CD4-positive, alpha-beta memory T cell (primary cell): ENCODE measurements at regions of chr5 and their contacts with region 1.

Region 1: GRCh38 chr5:140710899-140711552 is 10.8 kb downstream of the ZMAT2 start:
- DNase-seq: peak; percentile 86 to 95 (median 93)
- H3K4me3 ChIP-seq: peak overlapping the region; percentile 71 to 92
- H3K4me3 Mint-ChIP-seq: peak overlapping the region; percentile 96 to 100 (median 99)
- H3K27ac ChIP-seq: peak overlapping the region; percentile 82
- H3K27ac Mint-ChIP-seq: peak overlapping the region; percentile 97 to 100 (median 99)
- H3K4me1 ChIP-seq: peaks cover 19% of the 10 kb centered on the region
- H3K4me1 Mint-ChIP-seq: peaks cover 15 to 32% (median 23%) of the 10 kb centered on the region in 4 donors
- H3K27me3 ChIP-seq: no peaks in the 10 kb centered on the region
- H3K27me3 Mint-ChIP-seq: peaks cover 0 to 8% of the 10 kb centered on the region in 2 donors

Region 2: GRCh38 chr5:139335811-139336210 is 1375.2 kb before region 1 on chr5:
- CTCF ChIA-PET with region 1: no interaction called
- POLR2A ChIA-PET with region 1: no interaction called
- intact Hi-C with region 1: no loop called
- DNase-seq: peak in 1 of 5 donors; percentile 16
- H3K4me3 ChIP-seq: no peak overlapping the region
- H3K4me3 Mint-ChIP-seq: no peak overlapping the region
- H3K27ac ChIP-seq: no peak overlapping the region
- H3K27ac Mint-ChIP-seq: peak overlapping the region in 6 of 7 donors; percentile 11 to 87 (median 68)
- H3K4me1 ChIP-seq: peaks cover 6% of the 10 kb centered on the region
- H3K4me1 Mint-ChIP-seq: peaks cover 6 to 21% (median 12%) of the 10 kb centered on the region in 4 donors
- H3K27me3 ChIP-seq: no peaks in the 10 kb centered on the region
- H3K27me3 Mint-ChIP-seq: no peaks in the 10 kb centered on the region

Region 3: GRCh38 chr5:140547508-140548299 is 163.3 kb before region 1 on chr5 and contains the start of gene EIF4EBP3:
- CTCF ChIA-PET with region 1: interaction called, 6 read pairs
- POLR2A ChIA-PET with region 1: interaction called, 19 read pairs
- intact Hi-C with region 1: no loop called
- DNase-seq: peak; percentile 84 to 92 (median 87)
- H3K4me3 ChIP-seq: peak within 1 kb of the TSS; percentile 57 to 76
- H3K4me3 Mint-ChIP-seq: peak within 1 kb of the TSS; percentile 85 to 93 (median 89)
- H3K27ac ChIP-seq: peak within 1 kb of the TSS; percentile 77
- H3K27ac Mint-ChIP-seq: peak within 1 kb of the TSS; percentile 91 to 97 (median 97)
- H3K4me1 ChIP-seq: peaks cover 30% of the 10 kb centered on the region
- H3K4me1 Mint-ChIP-seq: peaks cover 19 to 50% (median 26%) of the 10 kb centered on the region in 4 donors
- H3K27me3 ChIP-seq: no peaks in the 10 kb centered on the region
- H3K27me3 Mint-ChIP-seq: no peaks in the 10 kb centered on the region
- total RNA-seq, gene EIF4EBP3: 15.3 to 18.8 TPM

Region 4: GRCh38 chr5:140639148-140639979 is 71.7 kb before region 1 on chr5 and contains the start of gene TMCO6:
- CTCF ChIA-PET with region 1: interaction called, 4 read pairs
- POLR2A ChIA-PET with region 1: interaction called, 11 read pairs
- intact Hi-C with region 1: loop called (anchors 2 kb)
- DNase-seq: peak; percentile 92 to 95 (median 95)
- H3K4me3 ChIP-seq: peak within 1 kb of the TSS; percentile 71 to 84
- H3K4me3 Mint-ChIP-seq: peak within 1 kb of the TSS; percentile 90 to 98 (median 93)
- H3K27ac ChIP-seq: peak within 1 kb of the TSS; percentile 69
- H3K27ac Mint-ChIP-seq: peak within 1 kb of the TSS; percentile 90 to 99 (median 96)
- H3K4me1 ChIP-seq: peaks cover 22% of the 10 kb centered on the region
- H3K4me1 Mint-ChIP-seq: peaks cover 21 to 50% (median 34%) of the 10 kb centered on the region in 4 donors
- H3K27me3 ChIP-seq: no peaks in the 10 kb centered on the region
- H3K27me3 Mint-ChIP-seq: no peaks in the 10 kb centered on the region
- total RNA-seq, gene TMCO6: 50.0 to 56.3 TPM

Region 5: DNA sequence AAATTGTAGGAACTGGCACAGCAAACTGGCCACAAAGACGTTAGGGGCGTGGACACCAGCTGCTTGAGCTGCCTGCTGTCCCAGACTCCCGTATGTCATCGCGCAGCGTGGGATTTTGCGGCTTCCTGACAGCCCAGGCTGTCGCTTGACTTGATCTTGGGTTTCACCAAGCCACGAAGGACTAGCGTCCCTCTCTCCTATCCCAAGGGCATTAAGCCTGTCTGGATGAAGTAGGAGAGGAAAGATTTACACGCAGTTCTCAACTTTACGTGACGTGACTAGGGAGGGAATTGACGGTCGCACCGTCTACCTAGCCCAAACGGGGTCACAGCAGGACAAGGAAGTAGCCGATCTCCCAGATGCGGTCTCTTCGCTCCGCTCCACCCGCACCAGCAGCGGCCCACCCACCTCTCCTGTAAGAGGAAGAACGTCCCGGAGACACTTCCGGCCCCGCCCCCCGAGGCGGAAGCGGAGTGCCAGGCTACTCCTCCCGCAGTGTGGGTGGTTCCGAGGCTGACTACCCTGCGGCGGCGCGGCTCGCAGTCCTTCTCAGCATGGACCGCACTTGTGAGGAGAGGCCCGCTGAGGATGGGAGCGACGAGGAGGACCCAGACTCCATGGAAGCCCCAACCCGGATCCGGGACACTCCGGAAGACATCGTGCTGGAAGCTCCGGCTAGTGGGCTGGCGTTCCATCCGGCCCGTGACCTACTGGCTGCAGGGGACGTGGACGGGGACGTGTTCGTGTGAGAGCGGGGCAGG is 46.5 kb before region 1 on chr5 and contains the start of gene WDR55:
- CTCF ChIA-PET with region 1: interaction called, 3 read pairs
- POLR2A ChIA-PET with region 1: interaction called, 27 read pairs
- intact Hi-C with region 1: loop called (anchors 1 kb)
- DNase-seq: peak; percentile 94 to 99 (median 94)
- H3K4me3 ChIP-seq: peak within 1 kb of the TSS; percentile 90 to 98
- H3K4me3 Mint-ChIP-seq: peak within 1 kb of the TSS; percentile 96 to 99 (median 98)
- H3K27ac ChIP-seq: peak within 1 kb of the TSS; percentile 95
- H3K27ac Mint-ChIP-seq: peak within 1 kb of the TSS; percentile 98 to 99 (median 99)
- H3K4me1 ChIP-seq: peaks cover 20% of the 10 kb centered on the region
- H3K4me1 Mint-ChIP-seq: peaks cover 27 to 52% (median 34%) of the 10 kb centered on the region in 4 donors
- H3K27me3 ChIP-seq: no peaks in the 10 kb centered on the region
- H3K27me3 Mint-ChIP-seq: no peaks in the 10 kb centered on the region
- total RNA-seq, gene WDR55: 47.1 to 49.6 TPM

Region 6: DNA sequence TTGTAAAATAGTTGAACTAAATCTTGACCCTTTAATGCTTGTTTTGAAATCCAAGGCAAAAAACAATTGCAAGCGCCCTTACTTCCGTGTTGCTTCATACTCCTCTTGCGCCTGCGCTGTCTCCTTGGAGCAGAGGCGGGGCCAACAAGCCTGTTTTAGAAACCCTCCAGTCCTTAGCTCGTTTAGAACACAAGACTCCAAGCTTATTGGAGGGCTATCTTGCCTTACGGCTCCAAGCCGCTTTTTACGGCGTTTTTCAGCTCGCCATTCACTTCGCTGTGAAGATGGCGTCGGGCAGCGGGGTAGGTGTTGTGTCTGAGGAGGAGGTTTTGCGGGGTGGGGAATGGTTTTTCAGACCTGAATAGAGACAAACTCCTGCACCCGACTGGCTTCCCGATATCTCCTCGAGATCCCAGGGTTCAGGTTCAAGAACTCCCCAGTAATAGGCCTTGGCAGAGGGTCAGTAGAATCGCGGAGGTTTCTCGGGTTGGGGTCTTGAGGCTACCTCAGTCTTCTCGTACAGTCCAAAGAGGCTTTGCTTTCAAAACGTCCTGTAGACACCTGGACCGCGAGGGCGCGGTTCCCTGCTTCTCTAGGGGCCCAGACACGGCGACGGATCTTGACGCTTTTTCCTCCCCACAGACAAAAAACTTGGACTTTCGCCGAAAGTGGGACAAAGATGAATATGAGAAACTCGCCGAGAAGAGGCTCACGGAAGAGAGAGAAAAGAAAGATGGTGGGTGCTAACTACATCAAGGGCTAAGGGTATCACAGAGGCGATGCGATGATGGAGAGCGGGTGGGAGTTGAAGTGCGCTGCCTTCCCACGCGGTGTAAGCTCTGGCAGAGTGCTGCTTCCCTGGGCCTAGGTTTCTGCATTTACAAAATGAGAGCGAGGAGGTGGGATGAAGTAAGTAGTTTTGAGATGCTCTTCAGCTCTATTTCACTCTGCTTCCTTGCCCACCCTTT is 10.6 kb before region 1 on chr5 and contains the start of gene ZMAT2:
- CTCF ChIA-PET with region 1: interaction called, 15 read pairs
- POLR2A ChIA-PET with region 1: interaction called, 63 read pairs
- intact Hi-C with region 1: loop called (anchors 1 kb)
- DNase-seq: peak; percentile 89 to 98 (median 94)
- H3K4me3 ChIP-seq: peak within 1 kb of the TSS; percentile 48 to 91
- H3K4me3 Mint-ChIP-seq: peak within 1 kb of the TSS; percentile 95 to 99 (median 98)
- H3K27ac ChIP-seq: peak within 1 kb of the TSS; percentile 80
- H3K27ac Mint-ChIP-seq: peak within 1 kb of the TSS; percentile 91 to 99 (median 98)
- H3K4me1 ChIP-seq: peaks cover 18% of the 10 kb centered on the region
- H3K4me1 Mint-ChIP-seq: peaks cover 17 to 31% (median 23%) of the 10 kb centered on the region in 4 donors
- H3K27me3 ChIP-seq: no peaks in the 10 kb centered on the region
- H3K27me3 Mint-ChIP-seq: no peaks in the 10 kb centered on the region
- total RNA-seq, gene ZMAT2: 56.3 to 57.4 TPM

Region 7: GRCh38 chr5:140734354-140734753 is 23.3 kb after region 1 on chr5:
- CTCF ChIA-PET with region 1: no interaction called
- POLR2A ChIA-PET with region 1: no interaction called
- intact Hi-C with region 1: no loop called
- DNase-seq: no peak
- H3K4me3 ChIP-seq: no peak overlapping the region
- H3K4me3 Mint-ChIP-seq: no peak overlapping the region
- H3K27ac ChIP-seq: no peak overlapping the region
- H3K27ac Mint-ChIP-seq: no peak overlapping the region
- H3K4me1 ChIP-seq: no peaks in the 10 kb centered on the region
- H3K4me1 Mint-ChIP-seq: peaks cover 0 to under 1% (median 0%) of the 10 kb centered on the region in 4 donors
- H3K27me3 ChIP-seq: no peaks in the 10 kb centered on the region
- H3K27me3 Mint-ChIP-seq: peaks cover 18 to 33% of the 10 kb centered on the region in 2 donors

Region 8: GRCh38 chr5:140977003-140977402 is 266.0 kb after region 1 on chr5:
- CTCF ChIA-PET with region 1: no interaction called
- POLR2A ChIA-PET with region 1: no interaction called
- intact Hi-C with region 1: no loop called
- DNase-seq: no peak
- H3K4me3 ChIP-seq: no peak overlapping the region
- H3K4me3 Mint-ChIP-seq: no peak overlapping the region
- H3K27ac ChIP-seq: no peak overlapping the region
- H3K27ac Mint-ChIP-seq: no peak overlapping the region
- H3K4me1 ChIP-seq: no peaks in the 10 kb centered on the region
- H3K4me1 Mint-ChIP-seq: no peaks in the 10 kb centered on the region
- H3K27me3 ChIP-seq: no peaks in the 10 kb centered on the region
- H3K27me3 Mint-ChIP-seq: peaks cover 5 to 11% of the 10 kb centered on the region in 2 donors